PC-9 (cell line): ENCODE measurements at regions of chr1 and their contacts with region 1.

Region 1: DNA sequence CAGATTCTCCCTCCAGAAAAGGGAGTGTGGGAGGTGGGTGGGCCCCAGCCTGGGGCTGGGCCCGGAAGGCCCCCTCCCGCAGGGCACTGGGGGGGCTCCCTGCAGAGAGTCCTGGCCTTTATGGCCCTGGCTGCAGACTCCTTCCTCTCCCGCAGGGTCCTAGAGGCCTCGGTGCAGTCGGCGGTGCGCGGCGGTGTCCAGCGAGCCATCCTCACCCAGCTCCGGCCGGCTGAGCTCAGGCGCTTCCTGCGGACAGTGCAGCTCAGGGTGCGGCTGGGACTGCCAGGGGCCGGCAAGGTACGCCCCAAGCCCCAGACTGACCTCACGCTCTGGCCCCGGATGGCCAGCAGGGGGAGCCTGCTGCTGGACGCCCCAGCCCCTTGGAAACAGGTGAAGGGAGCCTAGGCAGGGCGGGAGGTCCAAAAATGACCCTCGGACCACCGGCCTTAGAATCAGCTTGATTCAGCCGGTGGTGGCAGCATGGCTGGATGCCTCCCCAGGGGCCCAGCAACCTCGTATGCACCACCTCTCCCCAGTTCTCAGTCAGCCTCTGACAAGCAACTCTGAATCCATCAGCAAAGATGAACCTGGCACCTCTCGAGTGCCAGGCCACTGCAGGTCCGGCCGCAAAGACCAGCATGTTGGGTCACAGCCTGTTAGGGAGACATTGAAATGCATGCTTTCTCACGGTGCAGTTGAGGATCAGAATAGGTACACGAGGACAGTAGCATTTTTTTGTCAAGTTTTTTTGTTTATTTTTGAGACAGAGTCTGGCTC is 20.6 kb downstream of the MTHFR start:
- DNase-seq: peak; percentile 47 to 77
- H3K4me3 ChIP-seq: no peak overlapping the region
- H3K27ac ChIP-seq: no peak overlapping the region
- H3K4me1 ChIP-seq: no peaks in the 10 kb centered on the region; the same call in 1 of the 2 replicates
- H3K27me3 ChIP-seq: no peaks in the 10 kb centered on the region
- CTCF ChIP-seq: peak; percentile 76

Region 2: DNA sequence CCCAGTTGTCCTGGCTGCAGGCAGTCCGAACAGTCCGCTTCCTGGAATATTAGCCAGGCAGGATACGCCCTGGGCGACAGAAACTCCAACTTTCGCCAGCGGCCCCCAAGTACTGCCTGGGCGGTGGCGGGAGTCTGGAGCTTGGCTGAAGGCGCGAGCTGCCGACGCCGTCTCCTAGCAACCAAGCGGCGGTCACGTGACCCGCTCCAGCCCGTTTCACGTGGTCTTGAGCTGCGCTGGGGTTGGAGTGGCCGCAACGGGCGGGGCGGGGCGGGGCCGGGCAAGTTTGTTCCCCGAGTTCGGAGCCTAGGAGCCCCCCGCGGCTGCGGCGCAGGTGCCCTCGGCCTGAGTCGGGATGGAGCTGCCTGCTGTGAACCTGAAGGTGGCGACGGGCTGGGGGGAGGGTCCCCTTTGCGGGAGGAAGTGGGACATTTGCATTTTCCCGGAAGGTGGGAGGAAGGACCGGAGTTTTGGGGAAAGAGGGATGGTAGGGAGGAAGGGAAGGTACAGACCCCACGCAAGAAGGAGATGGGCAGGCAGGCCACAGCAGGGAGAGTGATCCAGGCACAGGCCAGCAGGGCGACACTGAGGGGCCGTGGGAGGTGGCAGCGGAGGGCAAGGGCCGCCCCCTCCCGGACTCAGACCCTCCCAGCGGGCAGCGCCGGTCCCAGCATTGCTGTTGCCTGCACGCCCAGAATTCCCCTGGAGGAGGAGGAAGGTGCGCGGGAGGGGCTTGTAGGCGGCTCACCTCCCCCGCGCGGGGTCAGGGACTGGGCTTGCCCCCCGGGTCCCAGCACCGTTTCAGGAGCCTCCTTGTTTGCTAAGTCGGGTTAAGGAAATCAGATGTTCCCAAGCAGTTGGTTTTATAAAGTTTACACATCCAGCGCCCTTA is 49.1 kb before region 1 on chr1 and contains the start of gene AGTRAP:
- CTCF ChIA-PET with region 1: no interaction called
- POLR2A ChIA-PET with region 1: interaction called, 4 read pairs
- intact Hi-C with region 1: loop called (anchors 5 kb)
- DNase-seq: peak; percentile 78 to 91
- H3K4me3 ChIP-seq: peak within 1 kb of the TSS; percentile 79
- H3K27ac ChIP-seq: peak within 1 kb of the TSS; percentile 96
- H3K4me1 ChIP-seq: peaks cover 9% of the 10 kb centered on the region
- H3K27me3 ChIP-seq: no peaks in the 10 kb centered on the region
- CTCF ChIP-seq: no peak
- total RNA-seq, gene AGTRAP: 75.5 and 77.7 TPM in 2 replicates

Region 3: GRCh38 chr1:11813021-11813420 is 27.8 kb after region 1 on chr1:
- CTCF ChIA-PET with region 1: interaction called, 11 read pairs
- POLR2A ChIA-PET with region 1: no interaction called
- intact Hi-C with region 1: no loop called
- DNase-seq: no peak
- H3K4me3 ChIP-seq: no peak overlapping the region
- H3K27ac ChIP-seq: no peak overlapping the region
- H3K4me1 ChIP-seq: 0 out of 2 replicates have a peak, but pooled peaks cover 2% of the 10 kb centered on the region
- H3K27me3 ChIP-seq: no peaks in the 10 kb centered on the region
- CTCF ChIP-seq: no peak

Region 4: GRCh38 chr1:11822096-11822495 is 36.9 kb after region 1 on chr1:
- CTCF ChIA-PET with region 1: no interaction called
- POLR2A ChIA-PET with region 1: interaction called, 4 read pairs
- intact Hi-C with region 1: loop called (anchors 5 kb)
- DNase-seq: no peak
- H3K4me3 ChIP-seq: peak overlapping the region; percentile 26; the same call in 1 of the 2 replicates
- H3K27ac ChIP-seq: peak overlapping the region; percentile 85
- H3K4me1 ChIP-seq: peaks cover 21% of the 10 kb centered on the region
- H3K27me3 ChIP-seq: no peaks in the 10 kb centered on the region
- CTCF ChIP-seq: no peak

Region 5: DNA sequence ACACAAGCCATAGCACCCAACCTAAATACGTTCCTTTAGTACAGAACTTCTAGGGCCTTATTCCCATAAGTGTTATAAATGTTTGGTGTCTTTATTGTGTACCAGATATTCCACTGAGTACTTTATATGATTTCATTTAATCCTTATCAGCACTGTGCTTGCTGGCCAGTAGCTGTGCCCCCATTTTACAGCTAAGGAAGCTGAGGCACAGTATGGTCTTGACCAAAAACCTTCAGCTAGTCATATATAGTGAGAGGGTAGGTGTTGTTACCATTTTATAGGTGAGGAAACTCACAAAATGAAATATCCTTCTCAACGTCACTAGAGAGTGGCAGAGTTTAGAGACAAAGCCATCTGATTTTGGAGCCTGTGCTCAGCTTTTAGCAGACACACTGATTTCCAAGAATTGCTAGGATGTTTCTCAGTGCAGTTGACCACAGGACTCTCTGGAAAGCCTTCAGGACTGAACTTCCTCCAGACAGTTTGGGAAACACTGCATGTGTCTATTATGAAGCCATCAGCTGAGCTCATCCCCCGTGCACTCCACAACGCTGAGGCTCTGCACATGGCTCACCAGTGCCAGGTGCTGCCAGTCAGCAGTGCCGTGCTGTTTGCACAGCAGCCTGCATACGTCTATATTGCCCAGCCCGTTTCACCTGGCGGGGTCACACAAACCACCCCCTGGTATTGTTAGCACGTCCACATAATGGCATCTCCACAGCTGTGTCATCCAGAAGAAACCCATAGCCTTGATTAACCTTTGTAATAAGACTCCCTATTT is 47.0 kb after region 1 on chr1:
- CTCF ChIA-PET with region 1: interaction called, 4 read pairs
- POLR2A ChIA-PET with region 1: no interaction called
- intact Hi-C with region 1: loop called (anchors 1 kb)
- DNase-seq: no peak
- H3K4me3 ChIP-seq: no peak overlapping the region
- H3K27ac ChIP-seq: no peak overlapping the region
- H3K4me1 ChIP-seq: no peaks in the 10 kb centered on the region
- H3K27me3 ChIP-seq: no peaks in the 10 kb centered on the region
- CTCF ChIP-seq: no peak